ENCODE measurements at regions of chr4 and their contacts with region 1.

Region 1: DNA sequence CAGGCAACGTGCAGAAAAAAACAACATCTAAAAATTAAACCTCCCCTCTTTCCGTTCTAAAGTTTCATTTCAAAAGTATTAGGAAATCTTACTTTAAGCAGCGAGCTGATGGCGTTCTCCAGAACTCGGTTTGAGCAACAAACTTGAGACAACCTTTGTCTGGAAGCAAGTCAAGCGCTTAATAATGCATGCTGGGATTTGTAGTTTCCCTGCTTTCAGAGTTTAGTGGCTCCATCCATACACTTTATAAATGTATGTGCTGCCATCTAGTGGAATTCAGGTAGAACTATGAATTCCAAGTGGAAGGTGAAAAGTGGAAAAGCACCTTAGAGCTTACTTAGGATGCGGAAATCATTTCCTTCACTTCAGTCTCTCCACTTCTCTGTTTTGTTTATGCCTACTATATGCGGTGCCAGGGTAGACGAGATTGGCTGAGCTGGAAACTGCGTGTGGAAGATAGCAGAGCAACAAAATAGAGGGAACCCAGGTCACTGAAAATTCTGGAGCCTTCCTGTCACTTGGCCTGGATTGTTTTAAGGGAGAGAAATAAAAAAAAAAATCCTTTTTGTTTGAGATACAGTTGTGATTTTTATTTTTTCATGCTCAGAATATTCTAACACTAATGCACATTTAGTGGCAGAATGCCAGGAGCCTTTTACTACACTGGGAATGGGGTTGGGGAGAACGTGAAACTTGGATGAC is at the start of gene BDH2:
- DNase-seq: peak in 1 of 2 donors; percentile 79
- ATAC-seq: peak; percentile 90 to 98 (median 96)
- H3K4me3 ChIP-seq: peak within 1 kb of the TSS; percentile 19 to 72 (median 54)
- H3K27ac ChIP-seq: peak within 1 kb of the TSS in 9 of 10 donors; percentile 14 to 84 (median 68)
- H3K4me1 ChIP-seq: peaks cover 0 to 34% (median 16%) of the 10 kb centered on the region in 9 donors
- H3K27me3 ChIP-seq: no peaks in the 10 kb centered on the region
- CTCF ChIP-seq: peak; percentile 67 to 84 (median 77)
- total RNA-seq, gene BDH2: 20.2 to 27.2 (median 24.5) TPM

Region 2: GRCh38 chr4:102430461-102430910 is 669.4 kb before region 1 on chr4:
- intact Hi-C with region 1: loop called in 3 of 10 experiments (anchors 5 to 10 kb)
- DNase-seq: no peak
- ATAC-seq: peak in 2 of 8 donors; percentile 32 to 34
- H3K4me3 ChIP-seq: peak overlapping the region; percentile 37 to 66 (median 58)
- H3K27ac ChIP-seq: peak overlapping the region in 8 of 10 donors; percentile 34 to 86 (median 62)
- H3K4me1 ChIP-seq: peaks cover 0 to 18% (median 0%) of the 10 kb centered on the region in 9 donors
- H3K27me3 ChIP-seq: no peaks in the 10 kb centered on the region
- CTCF ChIP-seq: no peak

Region 3: DNA sequence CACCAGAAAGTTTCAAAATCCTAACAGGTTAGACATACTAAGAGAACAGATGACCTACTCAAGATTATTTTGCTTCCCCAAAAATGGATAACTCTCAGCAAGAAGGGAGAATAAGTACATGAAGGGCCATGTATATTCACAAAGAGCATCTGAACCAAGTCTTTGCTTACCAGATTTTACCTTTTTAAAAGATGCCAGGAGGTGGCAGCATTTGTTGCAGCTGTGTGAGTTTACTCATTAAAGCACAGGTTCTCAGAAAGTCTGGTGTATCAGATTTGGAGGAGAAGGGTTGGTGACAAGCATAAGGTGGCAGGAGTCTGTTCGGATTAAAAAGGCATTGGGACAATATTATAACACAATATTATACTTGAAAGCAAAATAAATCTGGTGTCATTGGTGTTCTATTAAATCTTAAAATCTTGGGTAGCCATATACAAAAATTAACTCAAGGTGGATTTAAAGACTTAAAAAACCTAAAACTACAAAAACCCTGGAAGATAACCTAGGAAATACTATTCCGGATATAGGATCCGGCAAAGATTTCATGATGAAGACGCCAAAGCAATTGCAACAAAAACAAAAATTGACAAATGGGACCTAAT is 650.0 kb before region 1 on chr4:
- intact Hi-C with region 1: loop called in 3 of 10 experiments (anchors 5 to 10 kb)
- DNase-seq: peak in 1 of 2 donors; percentile 48
- ATAC-seq: peak in 4 of 8 donors; percentile 55 to 79 (median 65)
- H3K4me3 ChIP-seq: no peak overlapping the region
- H3K27ac ChIP-seq: no peak overlapping the region
- H3K4me1 ChIP-seq: no peaks in the 10 kb centered on the region
- H3K27me3 ChIP-seq: no peaks in the 10 kb centered on the region
- CTCF ChIP-seq: peak; percentile 30 to 79 (median 70)

Region 4: DNA sequence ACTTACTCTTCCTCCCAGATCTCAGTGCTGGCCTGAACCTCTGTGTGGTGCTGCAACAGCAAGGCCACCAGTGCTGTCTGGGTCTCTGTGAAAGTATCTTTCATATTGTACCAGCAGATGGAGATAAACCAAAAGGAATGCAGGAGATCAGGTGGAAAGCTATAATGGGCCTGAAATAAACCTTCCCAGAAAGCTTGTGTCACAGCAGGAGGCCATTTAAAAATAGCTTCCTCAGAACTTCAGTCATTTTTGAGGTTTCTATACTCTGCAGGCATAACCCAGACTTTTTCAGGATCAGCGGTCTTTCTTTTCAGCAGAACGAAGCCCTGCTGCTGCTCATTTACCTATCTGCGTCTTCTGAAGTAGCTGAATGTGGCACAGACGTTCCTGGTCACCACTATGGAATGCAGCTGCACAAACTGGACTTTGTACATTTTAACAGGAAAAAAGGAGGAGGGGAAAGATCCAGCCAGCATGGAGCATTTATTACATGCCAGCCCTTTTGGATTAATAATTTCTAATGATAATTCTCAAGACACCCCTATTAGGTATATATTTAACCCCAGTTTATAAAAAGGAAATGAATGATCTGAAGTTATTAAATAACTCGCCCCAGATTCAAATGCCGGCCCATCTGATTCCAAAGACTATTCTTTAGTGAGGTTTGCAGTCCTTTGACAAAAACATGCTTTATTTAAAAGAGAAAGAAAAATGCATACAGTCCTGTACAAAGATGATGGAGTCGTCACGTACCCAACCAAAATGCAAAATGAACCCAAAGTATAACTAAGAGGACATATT is 478.9 kb before region 1 on chr4:
- intact Hi-C with region 1: loop called in 7 of 10 experiments (anchors 1 to 10 kb)
- DNase-seq: no peak
- ATAC-seq: peak; percentile 74 to 94 (median 90)
- H3K4me3 ChIP-seq: peak overlapping the region in 4 of 10 donors; percentile 23 to 38 (median 27)
- H3K27ac ChIP-seq: peak overlapping the region in 3 of 10 donors; percentile 9 to 60 (median 13)
- H3K4me1 ChIP-seq: peaks cover 0 to 20% (median 5%) of the 10 kb centered on the region in 9 donors
- H3K27me3 ChIP-seq: no peaks in the 10 kb centered on the region
- CTCF ChIP-seq: peak in 8 of 9 donors; percentile 29 to 71 (median 56)

Region 5: GRCh38 chr4:103019308-103020124 is 80.3 kb before region 1 on chr4 and contains the start of gene SLC9B1:
- intact Hi-C with region 1: loop called in 1 of 10 experiments (anchors 10 kb)
- DNase-seq: peak; percentile 94 to 95
- ATAC-seq: peak; percentile 99 to 100 (median 100)
- H3K4me3 ChIP-seq: peak within 1 kb of the TSS; percentile 36 to 64 (median 56)
- H3K27ac ChIP-seq: peak within 1 kb of the TSS; percentile 67 to 92 (median 90)
- H3K4me1 ChIP-seq: peaks cover 0 to 15% (median 7%) of the 10 kb centered on the region in 9 donors
- H3K27me3 ChIP-seq: no peaks in the 10 kb centered on the region
- CTCF ChIP-seq: no peak
- total RNA-seq, gene SLC9B1: 0.19 to 1.4 (median 0.67) TPM in 7 of 10 donors, not detected in the others

Region 6: GRCh38 chr4:103046416-103047290 is 53.2 kb before region 1 on chr4:
- intact Hi-C with region 1: loop called in 4 of 10 experiments (anchors 1 to 10 kb)
- DNase-seq: peak in 1 of 2 donors; percentile 18
- ATAC-seq: peak in 7 of 8 donors; percentile 61 to 83 (median 78)
- H3K4me3 ChIP-seq: no peak overlapping the region
- H3K27ac ChIP-seq: no peak overlapping the region
- H3K4me1 ChIP-seq: no peaks in the 10 kb centered on the region
- H3K27me3 ChIP-seq: no peaks in the 10 kb centered on the region
- CTCF ChIP-seq: peak; percentile 31 to 75 (median 70)

Measured in heart right ventricle (tissue), 16 donors.